Ovary (tissue), 10 donors: ENCODE measurements at regions of chr3 and their contacts with region 1.

Region 1: GRCh38 chr3:48039487-48040190 is 23.4 kb upstream of the MAP4 start:
- DNase-seq: no peak
- H3K4me3 ChIP-seq: no peak overlapping the region
- H3K27ac ChIP-seq: peak overlapping the region in 1 of 2 donors; percentile 21
- H3K4me1 ChIP-seq: peaks cover 6% of the 10 kb centered on the region
- H3K27me3 ChIP-seq: no peaks in the 10 kb centered on the region
- CTCF ChIP-seq: no peak
- EP300 ChIP-seq: no peak
- POLR2A ChIP-seq: no peak

Region 2: DNA sequence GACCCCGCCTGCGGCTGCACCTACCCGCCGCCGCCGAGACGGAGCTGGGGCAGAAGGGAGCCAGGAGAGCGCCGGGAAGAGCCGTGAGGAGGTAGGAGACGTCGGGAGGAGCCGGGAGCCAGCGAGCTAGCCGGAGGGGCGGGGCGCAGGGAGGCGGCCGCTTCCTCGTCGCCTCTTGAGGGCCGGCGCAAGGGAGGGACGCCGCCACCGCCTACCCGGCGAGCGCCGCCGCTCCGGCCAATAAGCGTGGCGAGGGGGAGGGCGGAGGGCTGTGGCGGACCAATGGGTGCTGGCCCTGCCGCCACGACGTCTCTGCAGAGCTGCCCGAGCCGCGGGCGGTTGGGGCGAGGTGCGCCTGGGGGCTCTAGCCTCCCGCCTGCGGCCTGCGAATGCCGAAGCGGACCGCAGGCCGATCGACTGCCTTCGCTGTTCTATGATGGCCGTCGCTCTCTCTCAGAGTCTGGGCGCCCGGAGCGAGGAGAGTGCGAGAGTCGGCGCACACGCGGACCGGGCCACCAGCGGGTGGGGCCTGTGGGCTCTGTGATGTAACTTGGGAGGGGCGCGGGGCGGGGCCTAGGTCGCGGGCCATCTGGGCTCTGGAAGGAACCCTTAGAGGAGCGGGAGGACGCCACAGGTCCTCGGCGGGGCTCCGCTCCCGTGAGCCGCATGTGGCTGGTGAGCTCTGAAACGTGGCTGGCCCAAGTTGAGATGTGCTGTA is 49.3 kb after region 1 on chr3:
- intact Hi-C with region 1: loop called in 1 of 4 experiments (anchors 10 kb)
- DNase-seq: peak; percentile 95 to 97 (median 96)
- H3K4me3 ChIP-seq: peak overlapping the region; percentile 99
- H3K27ac ChIP-seq: peak overlapping the region; percentile 91 to 96
- H3K4me1 ChIP-seq: peaks cover 3% of the 10 kb centered on the region
- H3K27me3 ChIP-seq: no peaks in the 10 kb centered on the region
- CTCF ChIP-seq: peak in 2 of 3 donors; percentile 6 to 25
- EP300 ChIP-seq: peak; percentile 82
- POLR2A ChIP-seq: peak; percentile 82

Region 3: GRCh38 chr3:48119505-48120193 is 80.0 kb after region 1 on chr3:
- intact Hi-C with region 1: no loop called
- DNase-seq: peak; percentile 76 to 89 (median 86)
- H3K4me3 ChIP-seq: no peak overlapping the region
- H3K27ac ChIP-seq: peak overlapping the region in 1 of 2 donors; percentile 27
- H3K4me1 ChIP-seq: peaks cover 13% of the 10 kb centered on the region
- H3K27me3 ChIP-seq: no peaks in the 10 kb centered on the region
- CTCF ChIP-seq: no peak
- EP300 ChIP-seq: no peak
- POLR2A ChIP-seq: no peak